K562 (cell line): ENCODE measurements at regions of chr15 and their contacts with region 1.

Region 1: DNA sequence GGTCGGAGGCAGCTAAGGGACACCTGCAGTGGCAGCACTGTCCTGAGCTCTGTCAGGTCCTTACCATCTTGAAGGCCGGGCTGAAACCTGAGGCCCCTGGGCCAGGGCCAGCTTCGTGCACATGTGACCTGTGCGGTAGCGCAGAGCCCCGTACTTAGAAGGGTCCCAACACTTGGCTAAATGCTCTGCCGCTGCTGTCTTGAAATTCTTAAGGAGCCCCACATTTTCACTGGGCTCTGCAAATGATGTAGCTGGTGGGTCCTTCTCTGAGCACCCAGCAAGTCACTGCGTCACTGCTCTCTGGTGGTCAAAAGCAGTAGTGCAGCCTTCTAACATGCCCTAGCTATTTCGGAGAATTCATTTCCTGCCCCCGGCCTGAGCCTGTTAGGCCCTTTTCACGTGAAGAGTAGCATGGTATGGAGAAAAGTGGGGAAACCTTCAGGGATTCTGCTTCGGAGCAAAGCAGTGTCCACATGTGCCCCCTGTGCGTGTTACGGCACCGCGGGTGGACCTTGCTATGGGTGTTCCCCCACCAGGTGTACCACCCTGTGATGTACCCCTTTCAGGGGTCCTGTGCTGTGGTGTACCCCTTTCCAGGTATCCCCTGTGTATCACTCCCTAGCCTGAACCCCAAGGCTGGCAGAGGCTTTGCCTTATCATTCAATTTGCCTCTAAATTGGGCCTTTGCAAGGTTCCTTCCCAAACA is 79.7 kb downstream of the TMEM266 start:
- DNase-seq: peak; percentile 78 to 82 (median 82)
- ATAC-seq: peak; percentile 95
- H3K4me3 ChIP-seq: no peak overlapping the region
- H3K27ac ChIP-seq: no peak overlapping the region
- H3K4me1 ChIP-seq: no peaks in the 10 kb centered on the region; a peak in 1 of 5 replicates
- H3K27me3 ChIP-seq: peaks cover 33 to 77% of the 10 kb centered on the region in 2 experiments
- CTCF ChIP-seq: peak; percentile 90 to 92 (median 90)
- EP300 ChIP-seq: no peak
- POLR2A ChIP-seq: no peak
- RAD21 ChIP-seq: peak; percentile 57 to 89

Region 2: DNA sequence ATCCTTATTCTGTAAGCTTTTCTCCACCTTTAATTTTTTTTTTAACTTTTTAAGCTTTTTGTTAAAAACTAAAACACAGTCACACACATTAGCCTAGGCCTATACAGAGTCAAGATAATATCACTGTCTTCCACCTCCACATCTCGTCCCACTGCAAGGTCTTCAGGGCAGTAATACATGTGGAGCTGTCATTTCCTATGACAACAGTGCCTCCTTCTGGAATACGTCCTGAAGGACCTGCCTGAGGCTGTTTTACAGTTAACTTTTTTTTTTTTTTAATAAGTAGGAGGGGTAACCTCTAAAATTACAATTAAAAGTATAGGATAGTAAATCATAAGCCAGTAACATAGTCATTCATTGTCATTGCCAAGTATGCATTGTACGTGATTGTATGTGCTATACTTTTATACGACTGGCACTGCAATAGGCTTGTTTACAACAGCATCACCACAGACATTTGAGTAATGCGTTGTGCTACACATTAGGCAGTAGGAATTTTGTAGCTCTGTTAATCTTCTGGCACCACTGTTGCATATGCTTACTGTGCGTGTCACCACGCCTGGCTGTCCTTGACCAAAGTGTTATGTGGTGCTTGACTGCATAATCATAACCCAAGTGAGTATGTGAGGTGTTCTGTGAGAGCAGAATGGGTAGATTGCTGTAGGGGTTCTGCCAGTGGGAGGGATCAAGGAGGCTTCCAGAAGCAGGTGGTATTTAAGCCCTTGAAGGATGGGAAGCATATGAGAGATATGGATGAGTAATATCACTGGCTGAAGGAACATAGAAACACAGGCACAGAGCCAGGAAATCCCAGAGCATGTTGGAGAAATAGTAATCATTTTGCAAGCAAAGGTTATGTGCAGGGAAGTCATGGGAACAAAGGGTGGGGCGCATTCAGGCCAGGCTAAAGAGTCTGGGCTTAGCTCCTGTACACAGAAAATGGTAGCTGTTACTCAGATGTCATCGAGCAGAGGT is 217.5 kb before region 1 on chr15:
- CTCF ChIA-PET with region 1: no interaction called
- POLR2A ChIA-PET with region 1: no interaction called
- in situ Hi-C with region 1: no loop called
- intact Hi-C with region 1: loop called (anchors 10 kb)
- DNase-seq: peak in 2 of 4 experiments; percentile 38 to 84
- ATAC-seq: peak; percentile 99
- H3K4me3 ChIP-seq: no peak overlapping the region
- H3K27ac ChIP-seq: no peak overlapping the region
- H3K4me1 ChIP-seq: no peaks in the 10 kb centered on the region
- H3K27me3 ChIP-seq: no peaks in the 10 kb centered on the region
- CTCF ChIP-seq: peak; percentile 71 to 86 (median 72)
- EP300 ChIP-seq: no peak
- POLR2A ChIP-seq: no peak
- RAD21 ChIP-seq: peak; percentile 86 to 94

Region 3: GRCh38 chr15:75928680-75929608 is 210.6 kb before region 1 on chr15:
- CTCF ChIA-PET with region 1: interaction called, 14 read pairs
- POLR2A ChIA-PET with region 1: no interaction called
- in situ Hi-C with region 1: no loop called
- intact Hi-C with region 1: loop called (anchors 10 kb)
- DNase-seq: peak; percentile 28 to 70 (median 38)
- ATAC-seq: peak; percentile 95
- H3K4me3 ChIP-seq: no peak overlapping the region
- H3K27ac ChIP-seq: no peak overlapping the region
- H3K4me1 ChIP-seq: peaks cover 0 to 15% of the 10 kb centered on the region in 2 experiments; a peak in 2 of 5 replicates
- H3K27me3 ChIP-seq: no peaks in the 10 kb centered on the region
- CTCF ChIP-seq: peak; percentile 70 to 75 (median 73)
- EP300 ChIP-seq: no peak
- POLR2A ChIP-seq: no peak
- RAD21 ChIP-seq: peak; percentile 41 to 65

Region 4: DNA sequence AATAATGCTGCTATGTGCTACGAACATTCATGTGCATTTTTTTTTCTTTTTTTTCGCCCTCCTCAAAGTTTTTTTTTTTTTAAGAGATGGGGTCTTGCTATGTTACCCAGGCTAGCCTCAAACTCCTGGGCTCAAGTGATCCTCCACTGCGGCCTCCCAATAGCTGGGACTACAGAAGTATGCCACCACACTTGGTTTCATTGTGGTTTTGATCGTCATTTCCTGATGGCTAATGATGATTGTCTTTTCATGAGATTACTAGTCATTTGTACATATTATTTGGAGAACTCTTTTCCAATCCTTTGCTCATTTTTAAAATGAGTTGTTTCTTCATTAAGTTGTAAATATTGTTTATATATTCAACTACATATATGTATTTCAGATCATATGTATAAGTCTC is 187.0 kb before region 1 on chr15:
- CTCF ChIA-PET with region 1: no interaction called
- POLR2A ChIA-PET with region 1: no interaction called
- in situ Hi-C with region 1: no loop called
- intact Hi-C with region 1: loop called (anchors 10 kb)
- DNase-seq: no peak
- ATAC-seq: no peak
- H3K4me3 ChIP-seq: no peak overlapping the region
- H3K27ac ChIP-seq: no peak overlapping the region
- H3K4me1 ChIP-seq: no peaks in the 10 kb centered on the region
- H3K27me3 ChIP-seq: 0 out of 5 replicates have a peak, but pooled peaks cover 0 to 3% of the 10 kb centered on the region in 2 experiments
- CTCF ChIP-seq: no peak
- EP300 ChIP-seq: no peak
- POLR2A ChIP-seq: no peak
- RAD21 ChIP-seq: no peak

Region 5: GRCh38 chr15:76057332-76058000 is 82.1 kb before region 1 on chr15:
- CTCF ChIA-PET with region 1: interaction called, 30 read pairs
- POLR2A ChIA-PET with region 1: no interaction called
- in situ Hi-C with region 1: loop called (anchors 5 kb)
- intact Hi-C with region 1: loop called (anchors 1 kb)
- DNase-seq: peak; percentile 33 to 62 (median 48)
- ATAC-seq: no peak
- H3K4me3 ChIP-seq: no peak overlapping the region
- H3K27ac ChIP-seq: no peak overlapping the region
- H3K4me1 ChIP-seq: peaks cover 0 to 10% of the 10 kb centered on the region in 2 experiments; a peak in 3 of 5 replicates
- H3K27me3 ChIP-seq: peaks cover 37% of the 10 kb centered on the region in 2 experiments
- CTCF ChIP-seq: peak; percentile 62 to 74 (median 63)
- EP300 ChIP-seq: no peak
- POLR2A ChIP-seq: no peak
- RAD21 ChIP-seq: peak; percentile 36 to 65